IMR-90 (cell line): ENCODE measurements at regions of chr12 and their contacts with region 1.

Region 1: GRCh38 chr12:102300824-102301461 is 103.3 kb upstream of the PMCH start:
- DNase-seq: peak; percentile 73
- ATAC-seq: peak; percentile 80
- H3K4me3 ChIP-seq: no peak overlapping the region
- H3K27ac ChIP-seq: no peak overlapping the region
- H3K4me1 ChIP-seq: no peaks in the 10 kb centered on the region
- H3K27me3 ChIP-seq: no peaks in the 10 kb centered on the region
- CTCF ChIP-seq: peak; percentile 57
- POLR2A ChIP-seq: no peak
- RAD21 ChIP-seq: peak; percentile 65

Region 2: DNA sequence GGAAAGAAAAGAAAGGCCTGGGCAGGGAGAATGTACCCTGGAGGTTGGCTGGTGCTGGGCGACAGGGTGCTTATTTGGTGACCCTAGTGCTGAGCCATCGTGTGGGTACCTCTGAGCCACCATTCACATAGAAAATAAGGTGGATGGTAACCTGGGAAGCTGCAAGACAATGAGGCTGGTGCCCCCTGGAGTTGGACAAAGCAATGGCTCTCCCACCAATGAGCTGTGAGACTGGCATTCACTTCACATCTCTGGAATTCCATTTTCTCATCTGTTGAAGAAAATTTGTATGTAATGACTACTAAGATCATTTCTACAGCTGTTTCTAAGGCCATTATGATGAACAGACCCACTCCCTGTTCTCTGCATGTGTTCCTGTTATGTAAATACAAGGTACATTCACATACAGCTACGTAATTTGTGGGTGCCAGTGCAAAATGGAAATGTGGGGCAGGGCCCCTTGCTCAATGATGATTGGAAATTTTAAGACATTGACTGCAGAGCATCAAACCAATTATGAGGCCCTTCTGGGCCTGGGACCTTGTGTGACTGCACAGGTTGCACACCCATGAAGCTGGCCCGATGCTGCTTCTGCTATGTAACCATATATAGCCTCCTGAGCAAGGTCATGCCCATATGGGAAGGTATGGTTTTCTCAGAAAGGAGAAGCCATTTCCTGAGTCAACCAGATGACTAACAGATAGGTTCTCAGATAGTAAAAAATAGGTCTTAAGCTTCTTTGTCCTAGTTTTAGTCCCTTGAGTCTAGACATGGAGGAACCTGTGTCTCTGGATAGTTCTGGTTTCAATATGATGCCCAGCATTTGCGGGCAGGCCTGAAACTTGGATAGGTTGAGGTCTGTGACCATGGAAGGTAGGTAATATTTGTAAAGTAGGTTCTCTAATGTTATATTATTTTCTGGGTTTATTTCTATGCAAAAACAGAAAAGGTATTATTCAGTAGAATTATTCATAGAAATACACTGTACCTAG is 242.8 kb after region 1 on chr12:
- CTCF ChIA-PET with region 1: interaction called, 4 read pairs
- POLR2A ChIA-PET with region 1: no interaction called
- dilution Hi-C with region 1: no loop called
- in situ Hi-C with region 1: no loop called
- intact Hi-C with region 1: loop called (anchors 5 kb)
- DNase-seq: peak; percentile 28
- ATAC-seq: no peak; the same call in 1 of the 2 replicates
- H3K4me3 ChIP-seq: no peak overlapping the region
- H3K27ac ChIP-seq: no peak overlapping the region
- H3K4me1 ChIP-seq: peaks cover 18% of the 10 kb centered on the region
- H3K27me3 ChIP-seq: no peaks in the 10 kb centered on the region
- CTCF ChIP-seq: no peak; the same call in 1 of the 2 replicates
- POLR2A ChIP-seq: no peak
- RAD21 ChIP-seq: 0 out of 2 replicates have a peak, but pooled peaks have one; percentile 29